ENCODE measurements at regions of chr22 and their contacts with region 1.

Region 1: DNA sequence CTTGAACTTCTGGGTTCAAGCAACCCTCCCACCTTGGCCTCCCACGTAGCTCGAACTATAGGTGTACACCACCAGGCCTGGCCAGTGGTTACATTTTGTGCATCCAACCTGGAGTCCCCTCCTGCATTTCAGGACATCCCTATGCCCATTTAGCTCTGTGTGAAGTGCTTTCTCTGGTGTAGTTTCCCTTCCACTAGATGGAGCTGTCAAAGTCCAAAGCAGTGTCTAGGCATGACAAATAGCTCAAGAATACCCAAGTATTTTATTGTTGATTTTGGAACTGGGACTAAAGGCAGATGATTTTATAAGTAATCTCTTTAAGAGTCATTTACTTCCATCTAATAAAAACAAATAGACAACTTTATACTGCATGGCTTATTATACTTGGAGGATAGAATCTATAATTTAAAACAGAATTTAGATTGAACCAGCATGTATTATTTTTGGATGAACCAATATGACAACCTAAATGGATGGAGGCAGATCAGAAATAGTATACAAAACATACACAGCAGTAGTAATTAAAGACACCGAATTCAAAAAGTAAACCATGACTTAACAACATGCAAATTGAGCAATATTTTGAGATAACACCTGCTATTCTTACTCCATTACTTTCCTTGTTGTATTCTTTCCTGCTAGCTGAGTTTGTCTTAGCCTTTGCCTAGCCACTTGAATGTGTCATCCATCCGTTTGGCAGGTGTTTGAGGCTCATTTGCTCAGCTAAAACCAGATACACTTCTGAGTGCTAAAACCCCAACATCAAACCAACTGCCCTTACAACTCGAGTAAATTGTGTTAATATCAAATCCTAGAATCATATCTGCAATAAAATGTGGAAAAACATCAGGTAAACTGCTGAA is 37.7 kb downstream of the EIF4ENIF1 start:
- DNase-seq: peak; percentile 69
- ATAC-seq: peak; percentile 94
- H3K4me3 ChIP-seq: no peak overlapping the region
- H3K27ac ChIP-seq: no peak overlapping the region
- H3K4me1 ChIP-seq: no peaks in the 10 kb centered on the region
- H3K27me3 ChIP-seq: no peaks in the 10 kb centered on the region
- CTCF ChIP-seq: peak; percentile 69

Region 2: GRCh38 chr22:31474743-31475142 is 22.8 kb after region 1 on chr22:
- CTCF ChIA-PET with region 1: interaction called, 12 read pairs
- POLR2A ChIA-PET with region 1: no interaction called
- intact Hi-C with region 1: no loop called
- DNase-seq: no peak
- ATAC-seq: no peak
- H3K4me3 ChIP-seq: no peak overlapping the region
- H3K27ac ChIP-seq: no peak overlapping the region
- H3K4me1 ChIP-seq: no peaks in the 10 kb centered on the region
- H3K27me3 ChIP-seq: no peaks in the 10 kb centered on the region
- CTCF ChIP-seq: no peak

Region 3: GRCh38 chr22:31630331-31631329 is 178.7 kb after region 1 on chr22:
- CTCF ChIA-PET with region 1: no interaction called
- POLR2A ChIA-PET with region 1: no interaction called
- intact Hi-C with region 1: loop called (anchors 5 kb)
- DNase-seq: peak; percentile 71
- ATAC-seq: peak; percentile 79
- H3K4me3 ChIP-seq: peak overlapping the region; percentile 85
- H3K27ac ChIP-seq: peak overlapping the region; percentile 81
- H3K4me1 ChIP-seq: no peaks in the 10 kb centered on the region; the same call in 1 of the 2 replicates
- H3K27me3 ChIP-seq: no peaks in the 10 kb centered on the region
- CTCF ChIP-seq: no peak